Activated CD4-positive, alpha-beta memory T cell treated with anti-CD3 and anti-CD28 coated beads for 36 hours (primary cell): ENCODE measurements at regions of chr22 and their contacts with region 1.

Region 1: DNA sequence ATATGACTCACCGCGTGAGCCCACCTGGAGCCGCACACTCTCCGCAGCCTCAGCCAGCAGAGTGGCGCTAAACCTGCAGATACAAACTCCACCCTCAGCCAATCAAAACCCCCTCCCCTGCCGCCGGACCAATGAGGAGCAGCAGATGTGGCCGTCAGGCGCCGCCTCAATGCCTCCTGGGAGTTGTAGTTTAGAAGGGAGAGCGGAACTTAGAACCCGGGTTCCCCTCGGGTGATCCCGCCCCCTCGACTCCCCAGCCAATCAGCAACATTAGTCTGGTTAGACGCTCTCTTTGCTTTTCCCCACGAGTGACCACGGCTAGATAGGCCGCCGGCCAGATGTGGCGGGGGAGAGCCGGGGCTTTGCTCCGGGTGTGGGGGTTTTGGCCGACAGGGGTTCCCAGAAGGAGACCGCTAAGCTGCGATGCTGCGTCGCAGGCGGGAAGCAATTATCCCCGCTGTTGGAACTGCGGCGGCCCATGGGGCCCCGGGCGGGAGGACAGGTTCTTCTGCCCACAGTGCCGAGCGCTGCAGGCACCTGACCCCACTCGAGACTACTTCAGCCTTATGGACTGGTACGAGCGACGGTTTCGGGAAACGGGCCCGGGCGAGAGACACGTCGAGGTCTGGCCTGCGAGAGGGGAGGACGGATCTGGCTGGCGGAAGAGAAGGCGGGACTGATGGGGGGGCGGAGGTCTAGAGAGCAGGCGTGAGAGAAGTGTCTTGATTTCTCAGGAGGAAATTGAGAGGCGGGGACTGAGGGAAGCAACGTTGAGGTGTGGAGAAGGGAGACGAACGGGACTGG is at the starts of genes CHEK2 and HSCB:
- DNase-seq: peak; percentile 99
- H3K4me3 Mint-ChIP-seq: peak within 1 kb of the TSS; percentile 87
- H3K27ac Mint-ChIP-seq: peak within 1 kb of the TSS; percentile 84
- H3K4me1 Mint-ChIP-seq: peaks cover 31% of the 10 kb centered on the region
- H3K27me3 Mint-ChIP-seq: no peaks in the 10 kb centered on the region
- total RNA-seq, gene CHEK2: 30.0 to 36.0 TPM
- total RNA-seq, gene HSCB: 16.5 to 18.1 TPM

Region 2: GRCh38 chr22:27919222-27919941 is 822.6 kb before region 1 on chr22 and contains the start of gene PITPNB:
- CTCF ChIA-PET with region 1: no interaction called
- POLR2A ChIA-PET with region 1: no interaction called
- intact Hi-C with region 1: loop called (anchors 1 kb)
- DNase-seq: peak; percentile 99
- H3K4me3 Mint-ChIP-seq: peak within 1 kb of the TSS; percentile 100
- H3K27ac Mint-ChIP-seq: peak within 1 kb of the TSS; percentile 99
- H3K4me1 Mint-ChIP-seq: peaks cover 62% of the 10 kb centered on the region
- H3K27me3 Mint-ChIP-seq: no peaks in the 10 kb centered on the region
- total RNA-seq, gene PITPNB: 92.2 to 95.7 TPM

Region 3: DNA sequence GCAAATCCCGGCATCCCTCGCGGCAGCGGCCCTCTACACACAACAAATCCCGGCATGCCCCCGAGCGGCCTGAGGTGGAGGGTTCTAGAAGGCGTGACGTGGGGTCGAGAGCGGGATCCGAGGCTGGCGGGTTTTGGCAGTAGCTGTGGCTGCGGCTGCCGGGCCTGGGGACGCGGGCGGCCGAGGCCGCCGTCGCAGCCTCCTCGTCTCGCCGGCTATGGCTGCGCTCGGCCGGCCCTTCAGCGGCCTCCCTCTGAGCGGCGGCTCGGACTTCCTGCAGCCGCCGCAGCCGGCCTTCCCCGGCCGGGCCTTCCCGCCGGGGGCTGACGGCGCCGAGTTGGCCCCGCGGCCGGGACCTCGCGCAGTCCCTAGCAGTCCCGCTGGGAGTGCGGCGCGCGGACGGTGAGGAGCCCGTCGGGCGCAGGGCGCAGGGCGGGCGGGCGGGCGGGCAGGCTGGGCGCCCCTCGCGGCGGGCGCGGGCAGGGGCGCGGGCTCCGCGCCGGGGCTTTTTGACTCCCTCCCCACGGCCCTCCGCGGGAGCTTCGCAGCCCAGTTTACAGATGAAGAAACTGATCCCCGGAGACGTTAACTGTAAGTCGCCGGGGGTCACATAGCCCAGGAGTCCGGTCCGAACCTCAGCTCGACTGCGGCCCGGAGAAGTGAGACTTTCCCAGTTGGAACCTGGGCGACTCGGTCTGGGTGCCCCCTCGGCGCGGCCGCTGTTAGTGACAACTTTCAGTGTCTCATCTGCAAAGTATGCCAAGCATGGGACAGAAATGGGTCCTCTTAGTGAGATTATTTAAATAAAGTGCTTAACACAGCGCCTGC is 30.9 kb after region 1 on chr22 and contains the start of gene CCDC117:
- CTCF ChIA-PET with region 1: interaction called, 4 read pairs
- POLR2A ChIA-PET with region 1: interaction called, 4 read pairs
- intact Hi-C with region 1: loop called (anchors 1 kb)
- DNase-seq: peak; percentile 96
- H3K4me3 Mint-ChIP-seq: peak within 1 kb of the TSS; percentile 98
- H3K27ac Mint-ChIP-seq: peak within 1 kb of the TSS; percentile 97
- H3K4me1 Mint-ChIP-seq: peaks cover 24% of the 10 kb centered on the region
- H3K27me3 Mint-ChIP-seq: no peaks in the 10 kb centered on the region
- total RNA-seq, gene CCDC117: 27.7 to 31.6 TPM

Region 4: DNA sequence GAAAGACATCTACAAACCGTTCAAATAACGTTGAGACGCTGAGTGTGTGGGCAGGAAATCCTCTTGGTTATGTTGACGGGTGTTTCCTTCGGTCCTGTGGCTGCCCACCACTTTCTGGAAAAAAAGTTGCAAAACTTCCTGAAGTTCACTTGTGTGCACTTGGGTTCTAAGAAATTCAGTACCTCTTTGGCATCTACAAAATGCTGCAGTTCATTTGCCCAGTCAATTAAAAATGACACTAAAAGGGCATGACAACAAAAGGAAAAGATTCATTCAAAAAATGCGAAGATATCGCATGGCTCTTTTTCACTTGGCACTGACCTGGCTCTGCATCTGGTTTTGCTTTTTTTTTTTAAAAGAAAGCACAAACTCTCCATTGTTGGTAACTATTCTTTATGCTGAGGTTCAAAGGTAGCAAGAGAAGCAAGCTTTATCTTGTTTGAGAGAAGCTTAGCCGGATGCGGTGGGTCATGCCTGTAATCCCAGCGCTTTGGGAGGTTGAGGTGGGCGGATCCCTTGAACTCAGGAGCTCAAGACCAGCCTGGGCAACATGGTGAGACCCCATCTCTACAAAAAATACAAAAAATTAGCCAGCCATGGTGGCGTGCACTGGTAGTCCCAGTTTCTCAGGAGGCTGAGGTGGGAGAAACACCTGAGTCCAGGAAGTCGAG is 69.0 kb after region 1 on chr22:
- CTCF ChIA-PET with region 1: no interaction called
- POLR2A ChIA-PET with region 1: interaction called, 3 read pairs
- intact Hi-C with region 1: loop called (anchors 5 kb)
- DNase-seq: peak; percentile 60
- H3K4me3 Mint-ChIP-seq: peak overlapping the region; percentile 64
- H3K27ac Mint-ChIP-seq: peak overlapping the region; percentile 84
- H3K4me1 Mint-ChIP-seq: peaks cover 65% of the 10 kb centered on the region
- H3K27me3 Mint-ChIP-seq: no peaks in the 10 kb centered on the region

Region 5: DNA sequence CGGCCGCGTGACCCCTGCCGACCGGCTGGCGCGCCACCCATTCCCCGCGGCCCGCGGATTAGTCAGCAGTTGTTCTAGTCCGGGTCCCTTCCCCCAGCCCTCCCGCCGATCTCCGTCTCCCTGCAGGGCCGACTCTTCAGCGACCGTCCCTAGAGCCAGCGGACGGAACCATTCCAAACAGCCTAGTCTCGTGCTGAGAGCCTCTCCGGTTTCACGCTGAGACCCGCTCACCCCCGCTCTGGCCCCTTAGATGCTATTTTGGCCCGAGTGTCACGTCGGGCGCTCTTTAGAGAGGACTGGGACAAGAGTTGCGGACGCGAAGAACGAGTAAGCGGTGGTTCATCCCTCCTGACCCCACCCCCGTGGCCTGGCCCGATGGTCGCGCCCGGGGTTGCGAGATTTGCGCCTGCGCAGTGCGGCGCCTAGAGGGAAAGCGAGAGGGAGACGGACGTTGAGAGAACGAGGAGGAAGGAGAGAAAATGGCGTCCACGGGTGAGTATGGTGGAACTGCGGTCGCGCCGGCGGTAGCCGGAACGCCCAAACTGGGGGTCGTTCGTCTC is 526.0 kb after region 1 on chr22 and contains the starts of genes EWSR1 and RHBDD3:
- CTCF ChIA-PET with region 1: no interaction called
- POLR2A ChIA-PET with region 1: no interaction called
- intact Hi-C with region 1: loop called (anchors 1 kb)
- DNase-seq: peak; percentile 97
- H3K4me3 Mint-ChIP-seq: peak within 1 kb of the TSS; percentile 90
- H3K27ac Mint-ChIP-seq: peak within 1 kb of the TSS; percentile 99
- H3K4me1 Mint-ChIP-seq: peaks cover 46% of the 10 kb centered on the region
- H3K27me3 Mint-ChIP-seq: no peaks in the 10 kb centered on the region
- total RNA-seq, gene EWSR1: 286 to 302 TPM
- total RNA-seq, gene RHBDD3: 20.2 to 21.1 TPM